GM23248 (cell line): ENCODE measurements at regions of chr1 and their contacts with region 1.

Region 1: GRCh38 chr1:25819576-25820246 is at the start of gene MTFR1L:
- DNase-seq: peak; percentile 88
- H3K4me3 ChIP-seq: peak within 1 kb of the TSS; percentile 82
- H3K27ac ChIP-seq: peak within 1 kb of the TSS; percentile 61
- H3K4me1 ChIP-seq: peaks cover 25% of the 10 kb centered on the region
- H3K27me3 ChIP-seq: no peaks in the 10 kb centered on the region
- total RNA-seq, gene MTFR1L: 57.2 and 58.3 TPM in 2 replicates

Region 2: DNA sequence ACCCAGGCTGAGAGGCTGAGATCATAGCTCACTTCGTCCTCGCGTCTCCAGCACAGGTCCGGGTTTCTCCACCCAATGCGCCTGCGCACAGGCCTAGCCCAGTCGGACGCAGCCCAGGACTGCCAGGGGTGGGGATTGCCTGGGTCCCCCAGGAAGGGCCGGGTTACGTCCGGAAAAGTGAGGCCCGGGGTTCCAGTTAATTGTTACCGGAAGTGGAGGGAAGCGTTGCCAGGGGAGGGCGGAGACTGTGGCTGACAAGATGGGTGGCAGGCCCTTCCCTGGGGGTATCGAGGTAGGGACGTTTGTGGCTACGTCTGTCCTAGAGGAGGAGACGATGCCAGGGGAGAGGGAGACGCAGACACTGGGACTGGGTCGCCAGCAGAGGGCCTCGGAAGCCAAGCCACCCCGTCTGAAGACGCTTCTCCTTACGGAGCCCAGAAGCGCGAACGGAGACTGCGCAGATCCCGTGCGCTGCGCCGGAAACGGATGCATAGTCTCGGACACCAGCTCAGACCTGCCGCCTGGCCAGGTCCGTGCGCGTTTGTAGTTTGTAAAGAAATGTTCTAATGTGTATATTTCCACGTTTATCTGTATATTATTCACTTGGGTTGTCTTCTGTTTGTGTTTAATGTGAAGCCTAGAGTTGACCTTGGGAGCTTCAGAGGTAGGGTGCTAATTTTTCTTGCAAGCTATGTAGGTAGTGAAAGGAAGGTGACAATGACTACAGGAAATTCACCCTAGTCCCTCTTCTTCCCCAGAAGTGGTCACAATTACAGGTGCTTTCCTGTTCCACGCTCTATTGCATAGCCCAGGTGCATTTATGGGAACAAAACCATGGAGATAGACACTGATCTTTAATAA is 579.8 kb before region 1 on chr1:
- in situ Hi-C with region 1: loop called (anchors 25 kb)
- DNase-seq: peak; percentile 94
- H3K4me3 ChIP-seq: peak overlapping the region; percentile 62
- H3K27ac ChIP-seq: peak overlapping the region; percentile 73
- H3K4me1 ChIP-seq: peaks cover 59% of the 10 kb centered on the region
- H3K27me3 ChIP-seq: no peaks in the 10 kb centered on the region

Region 3: GRCh38 chr1:25997828-25998761 is 178.4 kb after region 1 on chr1 and contains the start of gene PAFAH2:
- in situ Hi-C with region 1: loop called (anchors 10 kb)
- DNase-seq: peak; percentile 100
- H3K4me3 ChIP-seq: peak within 1 kb of the TSS; percentile 84
- H3K27ac ChIP-seq: peak within 1 kb of the TSS; percentile 48
- H3K4me1 ChIP-seq: peaks cover 13% of the 10 kb centered on the region
- H3K27me3 ChIP-seq: no peaks in the 10 kb centered on the region
- total RNA-seq, gene PAFAH2: 10.7 and 11.9 TPM in 2 replicates